Naive thymus-derived CD4-positive, alpha-beta T cell (primary cell): ENCODE measurements at regions of chr6 and their contacts with region 1.

Region 1: GRCh38 chr6:111709615-111710398 is 104.1 kb upstream of the TRAF3IP2 start:
- DNase-seq: peak in 8 of 9 donors; percentile 43 to 78 (median 71)
- ATAC-seq: peak; percentile 89
- H3K4me3 ChIP-seq: no peak overlapping the region
- H3K4me3 Mint-ChIP-seq: peak overlapping the region in 8 of 10 donors; percentile 2 to 67 (median 53)
- H3K27ac ChIP-seq: peak overlapping the region; percentile 59
- H3K27ac Mint-ChIP-seq: peak overlapping the region; percentile 53 to 98 (median 93)
- H3K4me1 ChIP-seq: peaks cover 32 to 43% of the 10 kb centered on the region in 2 donors
- H3K4me1 Mint-ChIP-seq: peaks cover 32 to 64% (median 56%) of the 10 kb centered on the region in 7 donors
- H3K27me3 ChIP-seq: no peaks in the 10 kb centered on the region
- H3K27me3 Mint-ChIP-seq: no peaks in the 10 kb centered on the region

Region 2: GRCh38 chr6:111605100-111605751 is 104.6 kb before region 1 on chr6:
- CTCF ChIA-PET with region 1: no interaction called
- POLR2A ChIA-PET with region 1: no interaction called
- intact Hi-C with region 1: no loop called
- DNase-seq: peak in 8 of 9 donors; percentile 12 to 60 (median 34)
- ATAC-seq: peak; percentile 56
- H3K4me3 ChIP-seq: peak overlapping the region; percentile 85
- H3K4me3 Mint-ChIP-seq: peak overlapping the region; percentile 89 to 97 (median 94)
- H3K27ac ChIP-seq: peak overlapping the region; percentile 84
- H3K27ac Mint-ChIP-seq: peak overlapping the region; percentile 90 to 98 (median 95)
- H3K4me1 ChIP-seq: peaks cover 13 to 15% of the 10 kb centered on the region in 2 donors
- H3K4me1 Mint-ChIP-seq: peaks cover 25 to 61% (median 58%) of the 10 kb centered on the region in 7 donors
- H3K27me3 ChIP-seq: no peaks in the 10 kb centered on the region
- H3K27me3 Mint-ChIP-seq: peaks cover 0 to 2% (median 0%) of the 10 kb centered on the region in 5 donors

Region 3: GRCh38 chr6:111841822-111842221 is 132.0 kb after region 1 on chr6:
- CTCF ChIA-PET with region 1: interaction called, 5 read pairs
- POLR2A ChIA-PET with region 1: no interaction called
- intact Hi-C with region 1: loop called in 1 of 2 experiments (anchors 2 kb)
- DNase-seq: peak in 7 of 9 donors; percentile 38 to 63 (median 61)
- ATAC-seq: no peak
- H3K4me3 ChIP-seq: no peak overlapping the region
- H3K4me3 Mint-ChIP-seq: no peak overlapping the region
- H3K27ac ChIP-seq: peak overlapping the region; percentile 62
- H3K27ac Mint-ChIP-seq: no peak overlapping the region
- H3K4me1 ChIP-seq: peaks cover 98 to 100% of the 10 kb centered on the region in 2 donors
- H3K4me1 Mint-ChIP-seq: peaks cover 0 to 55% (median 0%) of the 10 kb centered on the region in 7 donors
- H3K27me3 ChIP-seq: no peaks in the 10 kb centered on the region
- H3K27me3 Mint-ChIP-seq: no peaks in the 10 kb centered on the region

Region 4: DNA sequence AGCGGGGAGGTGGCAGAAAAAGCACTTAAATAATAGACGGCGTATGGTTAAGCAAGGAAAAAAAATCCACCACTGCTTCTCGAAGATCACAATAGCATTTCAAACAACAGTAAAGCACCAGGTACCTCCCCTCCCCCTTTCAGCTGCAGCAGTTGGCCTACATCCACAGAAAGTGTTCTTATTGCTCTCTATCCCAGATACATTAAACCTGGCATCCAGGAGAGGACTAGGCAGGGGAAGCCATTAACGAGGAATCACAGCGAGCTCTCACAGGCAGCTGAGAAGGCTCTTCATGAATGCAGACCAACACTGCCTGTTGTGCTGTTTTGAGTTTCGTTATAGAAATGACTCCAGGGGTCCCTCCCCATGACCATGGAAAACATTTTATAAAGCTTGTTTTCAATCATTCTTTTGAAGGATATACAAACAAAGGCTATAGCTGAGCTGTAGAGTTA is 151.7 kb after region 1 on chr6:
- CTCF ChIA-PET with region 1: no interaction called
- POLR2A ChIA-PET with region 1: no interaction called
- intact Hi-C with region 1: no loop called
- DNase-seq: no peak
- ATAC-seq: peak; percentile 14
- H3K4me3 ChIP-seq: peak overlapping the region; percentile 6
- H3K4me3 Mint-ChIP-seq: peak overlapping the region in 9 of 10 donors; percentile 16 to 93 (median 40)
- H3K27ac ChIP-seq: peak overlapping the region; percentile 9
- H3K27ac Mint-ChIP-seq: peak overlapping the region in 7 of 9 donors; percentile 9 to 75 (median 38)
- H3K4me1 ChIP-seq: peaks cover 86 to 97% of the 10 kb centered on the region in 2 donors
- H3K4me1 Mint-ChIP-seq: peaks cover 0 to 100% (median 96%) of the 10 kb centered on the region in 7 donors
- H3K27me3 ChIP-seq: no peaks in the 10 kb centered on the region
- H3K27me3 Mint-ChIP-seq: no peaks in the 10 kb centered on the region

Region 5: DNA sequence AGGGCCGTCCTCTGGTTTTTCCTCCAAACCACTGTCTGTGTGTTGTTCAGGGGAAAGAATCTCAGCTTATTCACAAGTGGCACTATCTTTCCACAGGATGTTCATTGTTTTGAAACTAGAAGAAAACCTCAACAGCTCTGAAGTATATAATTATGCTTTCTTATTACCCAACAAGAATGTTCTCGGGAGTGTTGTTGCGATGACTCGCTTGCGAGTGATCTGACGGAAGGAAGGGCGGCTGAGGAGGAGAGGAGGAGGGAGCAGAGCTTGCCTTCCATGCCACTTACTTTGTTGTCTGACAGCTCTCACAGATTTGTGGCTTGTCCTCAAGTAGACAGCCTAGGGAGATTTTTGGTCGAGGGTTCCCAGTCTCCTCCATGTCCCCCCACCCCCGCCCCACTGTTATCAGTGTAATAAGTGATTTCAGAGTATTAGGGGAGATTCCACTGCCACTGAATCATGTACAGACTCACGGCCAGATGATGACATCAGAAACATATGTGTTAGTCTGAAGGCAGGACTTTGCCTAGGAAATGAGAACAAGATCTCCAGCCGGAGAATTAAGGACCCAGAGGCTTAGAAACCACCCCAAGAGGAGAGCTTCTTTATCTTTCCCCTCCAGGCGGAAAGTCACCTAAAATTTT is 263.4 kb after region 1 on chr6:
- CTCF ChIA-PET with region 1: no interaction called
- POLR2A ChIA-PET with region 1: interaction called, 3 read pairs
- intact Hi-C with region 1: loop called in 1 of 2 experiments (anchors 1 kb)
- DNase-seq: peak; percentile 41 to 92 (median 88)
- ATAC-seq: peak; percentile 90
- H3K4me3 ChIP-seq: peak overlapping the region; percentile 17
- H3K4me3 Mint-ChIP-seq: peak overlapping the region; percentile 55 to 82 (median 67)
- H3K27ac ChIP-seq: peak overlapping the region; percentile 95
- H3K27ac Mint-ChIP-seq: peak overlapping the region; percentile 84 to 99 (median 96)
- H3K4me1 ChIP-seq: peaks cover 7 to 77% of the 10 kb centered on the region in 2 donors
- H3K4me1 Mint-ChIP-seq: peaks cover 37 to 95% (median 82%) of the 10 kb centered on the region in 7 donors
- H3K27me3 ChIP-seq: no peaks in the 10 kb centered on the region
- H3K27me3 Mint-ChIP-seq: peaks cover 0 to 10% (median 0%) of the 10 kb centered on the region in 5 donors

Region 6: GRCh38 chr6:112010328-112010727 is 300.5 kb after region 1 on chr6:
- CTCF ChIA-PET with region 1: interaction called, 14 read pairs
- POLR2A ChIA-PET with region 1: interaction called, 5 read pairs
- intact Hi-C with region 1: loop called in 1 of 2 experiments (anchors 1 kb)
- DNase-seq: peak in 5 of 9 donors; percentile 37 to 57 (median 45)
- ATAC-seq: peak; percentile 56
- H3K4me3 ChIP-seq: no peak overlapping the region
- H3K4me3 Mint-ChIP-seq: peak overlapping the region in 1 of 10 donors; percentile 9
- H3K27ac ChIP-seq: no peak overlapping the region
- H3K27ac Mint-ChIP-seq: peak overlapping the region in 7 of 9 donors; percentile 0 to 41 (median 7)
- H3K4me1 ChIP-seq: no peaks in the 10 kb centered on the region
- H3K4me1 Mint-ChIP-seq: peaks cover 6 to 22% (median 14%) of the 10 kb centered on the region in 7 donors
- H3K27me3 ChIP-seq: no peaks in the 10 kb centered on the region
- H3K27me3 Mint-ChIP-seq: no peaks in the 10 kb centered on the region

Region 7: GRCh38 chr6:112163295-112164257 is 453.8 kb after region 1 on chr6:
- CTCF ChIA-PET with region 1: no interaction called
- POLR2A ChIA-PET with region 1: no interaction called
- intact Hi-C with region 1: loop called (anchors 1 to 5 kb)
- DNase-seq: peak; percentile 43 to 81 (median 64)
- ATAC-seq: peak; percentile 97
- H3K4me3 ChIP-seq: no peak overlapping the region
- H3K4me3 Mint-ChIP-seq: peak overlapping the region; percentile 49 to 88 (median 79)
- H3K27ac ChIP-seq: no peak overlapping the region
- H3K27ac Mint-ChIP-seq: peak overlapping the region in 7 of 9 donors; percentile 10 to 79 (median 48)
- H3K4me1 ChIP-seq: peaks cover 3 to 7% of the 10 kb centered on the region in 2 donors
- H3K4me1 Mint-ChIP-seq: peaks cover 9 to 18% (median 14%) of the 10 kb centered on the region in 7 donors
- H3K27me3 ChIP-seq: no peaks in the 10 kb centered on the region
- H3K27me3 Mint-ChIP-seq: peaks cover 25 to 60% (median 48%) of the 10 kb centered on the region in 5 donors